ENCODE measurements at regions of chr11 and their contacts with region 1.

Region 1: DNA sequence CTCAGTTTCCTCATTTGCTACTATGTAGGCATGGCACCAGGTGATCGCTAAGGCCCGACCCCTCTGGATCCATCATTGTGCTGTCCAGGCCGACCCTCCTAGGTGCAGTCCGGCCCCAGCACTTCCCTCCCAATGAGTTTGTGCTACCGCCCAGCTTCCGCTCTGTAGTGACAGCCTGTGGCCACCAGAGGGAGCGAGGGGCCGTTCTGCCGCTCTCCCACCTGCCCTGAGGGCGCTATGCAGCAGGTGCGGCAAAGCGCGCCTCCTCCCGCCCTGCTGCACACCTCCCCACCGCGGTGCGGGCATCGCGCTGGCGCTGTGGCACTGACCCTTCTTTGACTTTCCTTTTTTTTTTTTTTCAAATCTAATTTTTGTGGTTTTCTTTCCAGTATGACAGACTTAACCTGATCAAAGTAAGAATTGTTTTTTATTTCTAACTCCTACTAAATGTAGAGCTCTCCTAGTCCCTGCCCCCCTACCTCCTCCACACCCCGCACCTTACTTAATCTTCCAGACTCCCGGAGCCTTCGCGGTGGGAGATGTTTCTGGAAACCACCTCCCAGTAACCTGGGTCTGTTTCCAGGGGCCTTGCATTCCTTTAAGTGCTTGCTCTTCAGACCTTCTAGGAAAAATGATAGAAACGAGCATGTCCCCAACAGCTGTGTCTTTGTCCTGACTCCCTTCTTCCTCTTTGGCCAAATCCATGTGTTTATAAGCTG is 73.7 kb downstream of the SCN3B start:
- DNase-seq: peak; percentile 69
- H3K4me3 ChIP-seq: no peak overlapping the region
- H3K27ac ChIP-seq: no peak overlapping the region
- H3K4me1 ChIP-seq: no peaks in the 10 kb centered on the region
- H3K27me3 ChIP-seq: no peaks in the 10 kb centered on the region
- CTCF ChIP-seq: peak; percentile 69 to 91 (median 87)
- POLR2A ChIP-seq: no peak

Region 2: DNA sequence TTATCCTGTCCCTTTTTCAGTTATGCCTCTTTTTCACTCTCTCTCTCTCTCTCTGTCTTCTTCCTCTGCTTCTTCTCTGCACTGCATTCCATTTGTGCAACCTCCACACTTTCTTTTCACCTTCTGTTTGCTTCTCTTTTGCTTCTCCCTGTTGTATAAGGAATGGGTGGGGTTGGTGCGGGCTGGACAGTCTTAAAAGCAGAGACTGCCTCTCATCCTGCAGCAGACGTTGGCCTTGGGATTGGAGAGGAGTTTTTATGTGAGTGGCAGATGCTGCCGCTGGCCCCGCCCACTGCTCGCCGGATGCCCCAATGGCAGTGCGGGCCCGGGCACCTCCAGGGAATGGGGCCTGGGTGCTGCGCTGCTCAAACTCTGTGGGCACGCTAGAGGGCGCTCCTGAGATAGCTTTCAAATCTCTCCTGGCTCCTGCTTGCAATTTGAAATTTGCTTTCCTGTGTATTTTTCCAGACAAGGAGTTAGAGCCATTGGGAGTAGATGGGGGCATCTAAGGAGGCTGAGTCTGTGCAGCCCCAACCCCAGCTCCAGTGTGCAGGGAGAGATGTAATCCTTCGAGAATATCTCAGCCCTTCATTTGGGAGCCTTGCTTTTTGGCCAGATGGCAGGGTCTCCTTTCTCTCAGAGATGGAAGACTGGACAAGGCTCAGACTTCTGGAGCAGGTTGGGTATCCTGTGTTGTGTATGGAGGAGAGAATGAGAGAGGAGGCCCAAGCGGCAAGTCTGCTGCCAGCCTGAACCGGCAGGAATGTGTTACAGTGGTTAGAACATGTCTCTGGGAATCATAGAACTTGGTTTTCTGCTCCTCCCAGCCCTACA is 69.5 kb before region 1 on chr11:
- intact Hi-C with region 1: loop called (anchors 5 kb)
- DNase-seq: peak; percentile 91
- H3K4me3 ChIP-seq: no peak overlapping the region
- H3K27ac ChIP-seq: no peak overlapping the region
- H3K4me1 ChIP-seq: no peaks in the 10 kb centered on the region
- H3K27me3 ChIP-seq: no peaks in the 10 kb centered on the region
- CTCF ChIP-seq: peak; percentile 58 to 85 (median 78)
- POLR2A ChIP-seq: no peak

Region 3: DNA sequence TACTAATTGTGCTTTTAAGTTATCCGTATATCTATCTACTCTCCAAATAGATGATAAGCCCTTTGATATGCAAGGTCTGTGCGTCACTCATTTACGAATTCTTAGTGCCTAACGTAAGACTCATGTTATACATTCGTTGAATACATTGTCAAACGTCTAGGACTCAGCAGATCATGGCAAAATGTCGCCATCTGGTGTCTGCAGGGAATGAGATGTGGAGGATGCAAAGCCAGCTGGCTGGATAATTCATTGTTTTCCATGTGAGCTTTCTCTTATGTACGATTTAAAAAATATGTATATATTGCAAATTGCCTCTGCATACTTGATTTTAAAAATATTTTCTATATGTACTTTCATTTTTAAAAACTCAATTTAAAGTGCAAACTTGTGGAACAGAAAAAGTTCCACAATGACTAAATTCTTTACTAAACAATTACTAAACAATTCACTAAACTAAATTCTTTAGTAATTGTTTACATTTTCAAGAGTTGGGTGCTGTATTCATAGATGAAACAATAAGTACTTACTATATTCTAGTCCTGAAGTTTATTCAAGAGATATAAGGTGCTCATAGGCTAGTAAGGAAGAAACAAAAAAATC is 127.0 kb after region 1 on chr11:
- intact Hi-C with region 1: loop called (anchors 5 kb)
- DNase-seq: peak; percentile 74
- H3K4me3 ChIP-seq: no peak overlapping the region
- H3K27ac ChIP-seq: no peak overlapping the region
- H3K4me1 ChIP-seq: no peaks in the 10 kb centered on the region
- H3K27me3 ChIP-seq: no peaks in the 10 kb centered on the region
- CTCF ChIP-seq: peak; percentile 49 to 60 (median 53)
- POLR2A ChIP-seq: no peak